ENCODE measurements at regions of chr10 and their contacts with region 1.

Region 1: GRCh38 chr10:114565066-114565465 is 93.0 kb downstream of the ABLIM1 start:
- DNase-seq: no peak
- ATAC-seq: no peak

Region 2: DNA sequence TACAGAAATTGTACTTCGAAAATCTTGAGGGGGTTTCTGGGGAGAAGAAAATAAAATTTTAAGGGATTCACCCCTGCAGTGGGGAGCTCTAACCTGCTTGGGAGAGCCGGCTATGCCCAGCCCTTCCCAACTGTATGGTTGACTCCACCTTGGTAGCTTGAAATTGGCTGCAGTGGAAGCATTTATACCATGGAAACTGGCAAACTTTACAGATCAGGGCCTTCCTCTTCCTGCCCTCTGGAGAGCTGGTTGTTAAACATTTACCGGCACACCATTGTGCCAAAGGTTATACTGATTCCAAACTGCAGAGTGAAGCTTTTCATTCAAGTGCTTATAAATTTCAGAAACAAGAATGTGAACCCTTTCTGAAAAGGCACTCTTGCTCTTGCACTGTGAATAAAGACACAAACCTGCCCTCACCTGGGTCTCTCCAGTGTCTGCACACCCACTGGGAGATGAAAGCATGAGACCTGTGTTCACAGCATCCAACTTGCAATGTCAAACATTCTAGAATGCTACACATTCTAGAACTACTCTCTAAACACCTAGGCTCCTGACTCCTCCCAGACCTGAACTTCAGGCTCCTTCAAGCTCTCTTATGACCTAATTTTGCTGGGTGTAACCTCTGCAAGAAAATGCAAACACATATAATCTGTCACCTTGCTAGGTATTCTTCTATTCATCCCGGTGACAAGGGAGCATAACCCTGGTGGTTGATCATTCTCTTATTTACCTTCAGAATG is 48.3 kb after region 1 on chr10:
- intact Hi-C with region 1: loop called (anchors 1 kb)
- DNase-seq: no peak
- ATAC-seq: no peak

Region 3: GRCh38 chr10:114772496-114773196 is 207.6 kb after region 1 on chr10:
- intact Hi-C with region 1: no loop called
- DNase-seq: no peak
- ATAC-seq: no peak